OCI-LY7 (cell line): ENCODE measurements at regions of chr9 and their contacts with region 1.

Region 1: DNA sequence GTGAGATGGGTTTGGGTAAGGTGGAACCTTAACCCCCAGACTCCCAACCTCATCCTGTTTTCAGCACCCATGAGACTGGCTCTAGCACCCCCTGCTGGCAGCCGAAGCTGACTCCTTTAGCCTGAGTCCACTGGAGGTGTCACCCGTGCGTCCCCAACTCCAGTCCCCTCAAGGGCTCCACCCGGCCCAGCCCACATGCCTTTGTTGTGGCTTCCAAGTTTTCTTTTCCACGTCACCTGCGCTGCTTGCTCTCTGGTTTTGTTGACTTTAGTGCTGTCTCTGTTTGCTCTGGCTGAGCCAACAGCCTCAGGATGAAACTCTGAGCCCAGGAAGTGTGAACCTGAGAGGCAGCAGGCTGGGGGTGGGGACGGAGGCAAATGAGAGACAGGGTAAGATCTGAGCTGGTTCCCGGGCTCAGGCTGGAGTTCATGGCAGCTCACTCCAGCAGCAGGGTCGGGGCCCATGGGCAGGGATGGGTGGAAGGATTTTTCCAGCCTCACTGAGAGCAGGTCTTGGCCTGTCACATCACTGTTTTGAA is 13.2 kb upstream of the AQP7 start:
- DNase-seq: peak; percentile 81
- H3K4me3 ChIP-seq: no peak overlapping the region
- H3K27ac ChIP-seq: no peak overlapping the region
- H3K4me1 ChIP-seq: peaks cover 14% of the 10 kb centered on the region
- CTCF ChIP-seq: peak; percentile 93

Region 2: DNA sequence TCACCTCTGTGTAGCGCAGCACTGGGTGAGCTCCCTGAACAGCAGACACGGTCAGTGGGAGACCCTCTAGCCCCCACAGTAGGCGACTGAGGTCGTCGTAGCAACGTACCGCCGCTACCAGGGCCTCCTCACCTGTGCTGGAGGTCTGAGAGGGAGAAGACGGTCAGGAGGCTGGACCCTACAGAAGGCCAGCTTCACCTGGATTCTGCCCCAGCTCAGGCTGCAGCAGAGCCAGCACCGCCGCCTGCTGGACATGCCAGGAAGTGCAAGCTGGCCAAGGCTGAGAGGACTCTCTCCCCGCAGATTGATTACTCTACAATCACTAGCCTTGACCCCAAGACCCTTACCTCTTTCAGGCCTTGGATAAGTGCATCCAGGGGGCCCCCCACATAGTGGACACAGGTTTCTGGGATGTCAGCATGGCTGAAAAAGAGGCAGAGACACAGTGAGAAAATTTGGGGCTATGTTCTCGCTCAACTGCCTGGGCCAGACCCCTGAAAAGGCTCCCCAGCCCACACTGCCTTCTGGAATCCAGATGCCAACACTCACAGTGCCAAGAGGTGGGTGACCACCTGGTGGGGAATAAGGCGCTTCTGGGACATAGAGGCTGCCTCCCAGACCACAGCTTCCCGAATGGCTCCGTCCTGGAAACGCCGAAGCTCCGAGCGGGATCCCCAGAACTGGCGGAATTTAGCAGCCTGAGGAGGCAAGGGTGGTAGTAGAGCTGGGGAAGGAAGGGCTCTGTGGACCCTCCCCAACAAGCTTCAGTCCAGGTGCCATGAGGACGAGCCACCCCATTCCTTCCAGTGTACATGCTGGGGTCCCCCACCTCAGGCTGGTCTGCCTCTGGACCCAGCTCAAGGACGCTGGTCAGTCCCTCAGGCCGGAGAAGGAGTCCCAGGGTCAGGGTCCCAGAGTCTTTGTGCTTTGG is 51.3 kb after region 1 on chr9:
- CTCF ChIA-PET with region 1: interaction called, 5 read pairs
- POLR2A ChIA-PET with region 1: interaction called, 5 read pairs
- intact Hi-C with region 1: loop called (anchors 5 kb)
- DNase-seq: peak; percentile 60
- H3K4me3 ChIP-seq: no peak overlapping the region
- H3K27ac ChIP-seq: no peak overlapping the region
- H3K4me1 ChIP-seq: peaks cover 1% of the 10 kb centered on the region
- CTCF ChIP-seq: peak; percentile 83